Astrocyte of the cerebellum (primary cell): ENCODE measurements at regions of chr16 and their contacts with region 1.

Region 1: GRCh38 chr16:70646260-70647241 is at the start of gene IL34:
- DNase-seq: no peak
- H3K4me3 ChIP-seq: no peak within 1 kb of the TSS
- CTCF ChIP-seq: no peak

Region 2: DNA sequence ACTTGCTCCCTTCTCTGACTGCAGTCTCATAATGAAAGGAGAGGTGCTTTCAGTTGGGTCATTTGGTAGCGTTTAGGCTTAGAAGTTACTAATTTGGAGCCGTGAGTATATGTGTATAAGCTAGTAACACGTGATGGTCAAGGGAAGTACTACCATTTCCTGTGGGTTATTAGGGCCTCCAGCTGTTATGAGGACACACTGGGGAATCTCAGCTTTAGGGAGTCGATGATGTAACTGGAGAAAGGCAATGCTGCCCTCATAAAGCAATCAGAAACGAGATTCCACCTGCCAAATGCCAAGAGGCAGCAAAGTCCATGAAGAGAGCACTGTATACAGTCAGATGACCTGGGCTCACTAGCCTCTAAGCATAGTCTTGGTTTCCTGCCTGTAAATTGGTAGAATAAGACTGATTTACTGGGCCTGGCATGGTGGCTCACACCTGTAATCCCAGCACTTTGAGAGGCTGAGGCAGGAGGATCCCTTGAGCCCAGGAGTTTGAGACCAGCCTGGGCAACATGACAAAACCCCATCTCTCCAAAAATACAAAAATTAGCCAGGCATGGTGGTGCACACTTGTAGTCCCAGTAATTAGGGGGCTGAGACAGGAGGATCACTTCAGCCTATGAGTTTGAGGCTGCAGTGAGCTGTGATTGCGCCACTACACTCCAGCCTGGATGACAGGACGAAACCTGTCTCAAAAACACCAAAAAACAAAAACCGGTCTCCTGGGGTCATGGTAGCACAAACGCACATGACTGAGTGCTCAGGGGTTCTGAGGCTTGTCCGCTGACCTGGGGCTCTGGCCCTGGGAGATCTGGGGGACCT is 69.9 kb before region 1 on chr16:
- in situ Hi-C with region 1: loop called (anchors 5 kb)
- DNase-seq: no peak
- H3K4me3 ChIP-seq: no peak overlapping the region
- CTCF ChIP-seq: no peak

Region 3: GRCh38 chr16:70610273-70611223 is 36.0 kb before region 1 on chr16:
- in situ Hi-C with region 1: no loop called
- DNase-seq: no peak
- H3K4me3 ChIP-seq: no peak overlapping the region
- CTCF ChIP-seq: no peak